Endothelial cell of umbilical vein (primary cell): ENCODE measurements at regions of chrX and their contacts with region 1.

Region 1: DNA sequence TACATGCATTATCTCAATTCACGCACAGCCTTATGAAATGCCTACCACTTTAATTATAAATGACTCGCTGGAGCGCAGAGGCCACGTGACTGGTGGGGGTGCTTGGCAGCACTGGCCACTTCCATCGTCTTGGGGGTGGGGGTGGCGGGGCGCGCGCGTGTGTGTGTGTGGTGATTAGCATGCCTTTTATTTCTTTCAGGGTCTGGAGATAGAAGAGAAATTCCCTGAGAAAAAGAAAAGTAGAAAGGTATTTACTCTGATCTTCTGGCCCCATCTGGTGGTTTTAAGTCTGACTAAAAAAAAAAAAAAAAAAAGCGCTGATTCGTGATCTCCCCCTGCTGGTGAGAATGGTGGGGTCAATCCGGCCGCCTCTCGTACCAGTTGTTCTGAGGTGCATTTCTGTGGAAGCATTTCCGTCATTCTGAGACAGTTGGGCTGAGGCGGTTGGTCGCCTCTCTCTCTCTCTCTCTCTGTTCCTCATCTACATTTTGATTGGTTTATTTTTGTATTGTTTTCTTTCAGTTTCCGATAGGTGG is at the start of gene CCNB3:
- DNase-seq: peak; percentile 75
- H3K4me3 ChIP-seq: no peak within 1 kb of the TSS
- H3K27ac ChIP-seq: peak within 1 kb of the TSS; percentile 24
- H3K4me1 ChIP-seq: peaks cover 24% of the 10 kb centered on the region
- H3K27me3 ChIP-seq: no peaks in the 10 kb centered on the region
- CTCF ChIP-seq: peak; percentile 55 to 57
- POLR2A ChIP-seq: no peak
- total RNA-seq, gene CCNB3: 0.32 and 0.77 TPM in 2 replicates

Region 2: GRCh38 chrX:49754233-49754857 is 450.1 kb before region 1 on chrX:
- CTCF ChIA-PET with region 1: no interaction called
- POLR2A ChIA-PET with region 1: no interaction called
- dilution Hi-C with region 1: no loop called
- intact Hi-C with region 1: no loop called
- DNase-seq: peak; percentile 32
- H3K4me3 ChIP-seq: no peak overlapping the region
- H3K27ac ChIP-seq: no peak overlapping the region
- H3K4me1 ChIP-seq: no peaks in the 10 kb centered on the region
- H3K27me3 ChIP-seq: peaks cover 0 to 3% of the 10 kb centered on the region in 2 experiments
- CTCF ChIP-seq: peak; percentile 59 to 71
- POLR2A ChIP-seq: no peak

Region 3: DNA sequence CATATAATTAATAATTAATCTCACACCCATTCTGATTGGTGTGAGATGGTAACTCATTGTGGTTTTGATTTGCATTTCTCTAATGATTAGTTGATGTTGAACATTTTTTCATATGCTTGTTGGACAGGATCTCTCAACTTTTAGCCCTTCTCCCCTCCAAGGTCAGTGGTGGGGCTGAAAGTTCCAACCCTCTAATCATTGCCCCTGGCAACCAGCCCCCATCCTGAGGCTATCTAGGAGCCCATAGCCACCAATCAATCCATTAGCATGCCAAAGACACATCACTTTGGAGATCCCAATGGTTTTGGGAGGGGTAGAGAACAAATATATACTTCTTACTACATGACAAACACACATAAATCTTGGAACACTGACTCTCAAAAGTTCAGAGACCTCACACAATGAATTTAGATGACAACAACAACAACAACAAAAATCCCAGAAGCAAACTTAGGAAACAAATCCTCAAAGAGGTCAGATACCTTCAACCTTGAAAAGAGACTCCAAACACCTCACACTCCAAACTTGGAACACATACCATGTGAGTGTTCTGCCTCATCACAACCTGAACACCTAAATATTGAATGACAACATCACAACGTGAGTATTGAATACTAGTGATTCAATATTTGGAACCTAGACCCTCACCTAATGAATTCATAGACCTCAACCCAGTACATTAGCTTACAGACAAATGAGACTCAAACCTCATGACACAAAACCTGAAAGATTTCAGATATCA is 394.4 kb before region 1 on chrX:
- CTCF ChIA-PET with region 1: no interaction called
- POLR2A ChIA-PET with region 1: no interaction called
- dilution Hi-C with region 1: no loop called
- intact Hi-C with region 1: no loop called
- DNase-seq: no peak
- H3K4me3 ChIP-seq: no peak overlapping the region
- H3K27ac ChIP-seq: no peak overlapping the region
- H3K4me1 ChIP-seq: no peaks in the 10 kb centered on the region
- H3K27me3 ChIP-seq: no peaks in the 10 kb centered on the region
- CTCF ChIP-seq: no peak
- POLR2A ChIP-seq: no peak

Region 4: GRCh38 chrX:49878834-49879659 is 325.4 kb before region 1 on chrX and contains the start of gene USP27X:
- CTCF ChIA-PET with region 1: interaction called, 9 read pairs
- POLR2A ChIA-PET with region 1: no interaction called
- dilution Hi-C with region 1: no loop called
- intact Hi-C with region 1: loop called (anchors 1 kb)
- DNase-seq: peak; percentile 77
- H3K4me3 ChIP-seq: peak within 1 kb of the TSS; percentile 62 to 75 (median 75)
- H3K27ac ChIP-seq: peak within 1 kb of the TSS; percentile 24
- H3K4me1 ChIP-seq: peaks cover 5% of the 10 kb centered on the region
- H3K27me3 ChIP-seq: no peaks in the 10 kb centered on the region
- CTCF ChIP-seq: peak; percentile 48 to 56
- POLR2A ChIP-seq: no peak
- total RNA-seq, gene USP27X: 2.3 and 3.0 TPM in 2 replicates

Region 5: GRCh38 chrX:49884290-49884862 is 320.1 kb before region 1 on chrX:
- CTCF ChIA-PET with region 1: interaction called, 9 read pairs
- POLR2A ChIA-PET with region 1: no interaction called
- dilution Hi-C with region 1: no loop called
- intact Hi-C with region 1: loop called (anchors 1 kb)
- DNase-seq: peak; percentile 47
- H3K4me3 ChIP-seq: no peak overlapping the region
- H3K27ac ChIP-seq: no peak overlapping the region
- H3K4me1 ChIP-seq: peaks cover 5% of the 10 kb centered on the region
- H3K27me3 ChIP-seq: no peaks in the 10 kb centered on the region
- CTCF ChIP-seq: peak; percentile 59 to 76
- POLR2A ChIP-seq: no peak

Region 6: GRCh38 chrX:49915361-49916222 is 288.8 kb before region 1 on chrX:
- CTCF ChIA-PET with region 1: interaction called, 5 read pairs
- POLR2A ChIA-PET with region 1: no interaction called
- dilution Hi-C with region 1: no loop called
- intact Hi-C with region 1: loop called (anchors 1 kb)
- DNase-seq: peak; percentile 49
- H3K4me3 ChIP-seq: no peak overlapping the region
- H3K27ac ChIP-seq: no peak overlapping the region
- H3K4me1 ChIP-seq: no peaks in the 10 kb centered on the region
- H3K27me3 ChIP-seq: no peaks in the 10 kb centered on the region
- CTCF ChIP-seq: peak; percentile 62 to 68
- POLR2A ChIP-seq: no peak

Region 7: GRCh38 chrX:50081282-50081889 is 123.0 kb before region 1 on chrX:
- CTCF ChIA-PET with region 1: no interaction called
- POLR2A ChIA-PET with region 1: no interaction called
- dilution Hi-C with region 1: no loop called
- intact Hi-C with region 1: loop called (anchors 1 kb)
- DNase-seq: peak; percentile 34
- H3K4me3 ChIP-seq: no peak overlapping the region
- H3K27ac ChIP-seq: no peak overlapping the region
- H3K4me1 ChIP-seq: no peaks in the 10 kb centered on the region
- H3K27me3 ChIP-seq: no peaks in the 10 kb centered on the region
- CTCF ChIP-seq: peak; percentile 15 to 53
- POLR2A ChIP-seq: no peak

Region 8: GRCh38 chrX:50100188-50100587 is 104.2 kb before region 1 on chrX:
- CTCF ChIA-PET with region 1: interaction called, 63 read pairs
- POLR2A ChIA-PET with region 1: no interaction called
- dilution Hi-C with region 1: no loop called
- intact Hi-C with region 1: loop called (anchors 1 kb)
- DNase-seq: peak; percentile 45
- H3K4me3 ChIP-seq: no peak overlapping the region
- H3K27ac ChIP-seq: no peak overlapping the region
- H3K4me1 ChIP-seq: peaks cover 6% of the 10 kb centered on the region
- H3K27me3 ChIP-seq: no peaks in the 10 kb centered on the region
- CTCF ChIP-seq: peak; percentile 12 to 20
- POLR2A ChIP-seq: no peak

Region 9: DNA sequence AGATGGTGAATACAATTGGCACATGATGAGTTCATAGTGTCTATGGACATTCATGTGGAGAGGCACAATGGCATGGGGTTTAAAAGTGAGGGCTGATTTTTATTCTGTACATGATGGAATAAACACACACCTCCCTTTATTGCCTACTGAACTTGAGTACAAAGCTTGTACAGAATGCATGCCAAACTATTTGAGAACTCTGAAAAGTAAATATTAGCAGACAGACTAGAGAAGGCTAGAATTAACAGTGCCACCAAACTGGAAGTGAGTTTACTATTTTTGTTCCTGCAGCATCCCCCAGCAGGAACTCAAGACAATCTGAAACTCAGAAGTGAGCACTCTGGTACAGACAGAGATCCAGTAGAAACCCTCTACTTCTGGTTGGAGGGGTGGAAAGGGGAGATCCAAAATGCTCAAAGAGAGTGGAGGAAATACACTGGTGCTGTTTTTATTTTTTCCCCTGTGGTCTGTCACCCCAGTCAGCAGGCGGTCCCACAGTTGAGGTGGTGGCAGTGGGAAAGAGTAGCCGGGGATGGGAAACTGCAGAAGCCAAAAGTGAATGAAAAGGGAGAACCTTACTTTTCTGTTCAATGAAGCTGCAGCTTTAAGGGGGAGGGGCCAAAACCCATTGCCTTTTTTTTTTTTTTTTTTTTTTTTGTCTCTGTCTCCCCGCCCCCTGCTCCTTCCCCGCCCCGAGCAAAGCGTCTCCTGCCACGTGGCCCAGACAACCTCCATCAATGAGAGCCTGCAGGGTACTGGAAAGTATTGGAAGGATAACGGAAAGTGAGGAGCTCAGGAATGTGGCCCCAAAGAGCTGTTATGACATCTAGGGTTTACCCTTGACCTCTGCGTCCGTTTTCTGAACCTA is 24.1 kb before region 1 on chrX:
- CTCF ChIA-PET with region 1: interaction called, 4 read pairs
- POLR2A ChIA-PET with region 1: no interaction called
- dilution Hi-C with region 1: no loop called
- intact Hi-C with region 1: loop called (anchors 2 kb)
- DNase-seq: no peak
- H3K4me3 ChIP-seq: no peak overlapping the region
- H3K27ac ChIP-seq: no peak overlapping the region
- H3K4me1 ChIP-seq: peaks cover 4% of the 10 kb centered on the region
- H3K27me3 ChIP-seq: no peaks in the 10 kb centered on the region
- CTCF ChIP-seq: no peak
- POLR2A ChIP-seq: no peak

Region 10: GRCh38 chrX:50381729-50382415 is 177.4 kb after region 1 on chrX:
- CTCF ChIA-PET with region 1: no interaction called
- POLR2A ChIA-PET with region 1: no interaction called
- dilution Hi-C with region 1: no loop called
- intact Hi-C with region 1: no loop called
- DNase-seq: no peak
- H3K4me3 ChIP-seq: no peak overlapping the region
- H3K27ac ChIP-seq: no peak overlapping the region
- H3K4me1 ChIP-seq: no peaks in the 10 kb centered on the region
- H3K27me3 ChIP-seq: no peaks in the 10 kb centered on the region
- CTCF ChIP-seq: no peak
- POLR2A ChIP-seq: no peak